H1 (cell line): ENCODE measurements at regions of chr3 and their contacts with region 1.

Region 1: DNA sequence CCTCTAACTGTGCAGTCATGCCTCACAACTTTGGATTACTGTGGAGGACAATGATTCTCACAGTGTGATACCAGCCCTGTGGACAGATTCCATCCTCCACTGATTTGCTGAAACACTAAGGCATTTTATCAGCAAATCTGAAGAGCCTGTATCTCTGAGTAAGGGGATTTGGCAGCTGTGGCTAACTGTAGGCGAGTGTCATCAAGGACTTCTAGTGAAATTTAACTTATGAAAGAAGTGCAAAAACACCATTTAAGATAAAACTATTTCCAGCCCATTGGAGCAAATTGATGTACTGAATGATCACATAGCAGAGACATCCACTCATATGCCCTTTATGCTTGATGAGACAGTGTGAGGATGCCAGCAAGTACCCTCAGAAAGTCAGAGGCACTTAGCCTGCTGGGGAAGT is 13.9 kb upstream of the TMPRSS7 start:
- DNase-seq: no peak
- H3K4me3 ChIP-seq: no peak overlapping the region
- H3K27ac ChIP-seq: no peak overlapping the region
- H3K4me1 ChIP-seq: no peaks in the 10 kb centered on the region
- H3K27me3 ChIP-seq: no peaks in the 10 kb centered on the region
- CTCF ChIP-seq: no peak
- EP300 ChIP-seq: no peak
- POLR2A ChIP-seq: no peak
- RAD21 ChIP-seq: no peak

Region 2: GRCh38 chr3:111989061-111989678 is 31.5 kb before region 1 on chr3:
- CTCF ChIA-PET with region 1: interaction called, 384 read pairs
- POLR2A ChIA-PET with region 1: interaction called, 3 read pairs
- DNase-seq: no peak
- H3K4me3 ChIP-seq: no peak overlapping the region
- H3K27ac ChIP-seq: no peak overlapping the region
- H3K4me1 ChIP-seq: no peaks in the 10 kb centered on the region
- H3K27me3 ChIP-seq: no peaks in the 10 kb centered on the region
- CTCF ChIP-seq: peak in 2 of 3 experiments; percentile 64 to 75; a peak in 3 of 4 replicates
- EP300 ChIP-seq: no peak
- POLR2A ChIP-seq: no peak
- RAD21 ChIP-seq: peak; percentile 61 to 64